PC-3 (cell line): ENCODE measurements at regions of chr5 and their contacts with region 1.

Region 1: DNA sequence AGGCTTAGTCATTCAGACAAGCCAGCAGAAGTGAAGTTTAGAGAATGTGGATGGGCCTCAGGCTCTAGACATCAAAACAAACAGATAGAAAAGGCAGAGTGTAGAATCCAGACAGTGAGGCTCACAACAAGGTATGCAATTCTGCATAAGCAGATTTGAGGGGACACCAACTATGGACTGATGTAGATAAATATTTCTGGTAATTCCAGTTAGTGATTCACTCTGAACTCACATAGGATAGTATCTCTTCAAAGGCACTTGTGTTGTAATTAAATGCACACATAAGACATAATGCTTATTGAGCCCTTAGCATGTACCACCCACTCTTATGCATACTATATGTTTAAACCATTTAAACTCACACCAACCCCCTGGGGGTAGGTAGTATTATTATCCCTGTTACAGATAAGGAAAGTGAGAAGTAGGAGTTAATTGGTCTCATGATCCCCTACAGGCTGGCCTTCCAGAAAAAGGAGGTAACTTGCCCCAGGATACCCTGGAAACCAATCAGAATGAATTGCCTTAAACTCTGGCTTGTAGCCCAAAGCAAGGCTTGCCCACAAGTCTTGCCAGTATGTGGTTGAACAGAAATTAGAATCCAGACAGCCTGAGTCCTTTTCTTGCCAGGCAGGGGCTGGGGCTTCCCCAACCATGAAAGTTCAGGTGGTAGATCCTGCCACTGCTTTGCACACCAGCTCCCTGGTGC is 39.5 kb upstream of the HSPB3 start:
- DNase-seq: peak; percentile 77
- ATAC-seq: peak; percentile 51
- H3K4me3 ChIP-seq: no peak overlapping the region
- H3K27ac ChIP-seq: no peak overlapping the region
- H3K4me1 ChIP-seq: peaks cover 7% of the 10 kb centered on the region; the same call in 1 of the 2 replicates
- H3K27me3 ChIP-seq: no peaks in the 10 kb centered on the region
- CTCF ChIP-seq: no peak

Region 2: GRCh38 chr5:54295651-54296276 is 120.3 kb before region 1 on chr5:
- CTCF ChIA-PET with region 1: no interaction called
- POLR2A ChIA-PET with region 1: no interaction called
- intact Hi-C with region 1: loop called (anchors 5 kb)
- DNase-seq: no peak
- ATAC-seq: peak; percentile 53
- H3K4me3 ChIP-seq: no peak overlapping the region
- H3K27ac ChIP-seq: no peak overlapping the region
- H3K4me1 ChIP-seq: peaks cover 11% of the 10 kb centered on the region; the same call in 1 of the 2 replicates
- H3K27me3 ChIP-seq: no peaks in the 10 kb centered on the region
- CTCF ChIP-seq: no peak

Region 3: GRCh38 chr5:54310433-54311175 is 105.4 kb before region 1 on chr5 and contains the start of gene ARL15:
- CTCF ChIA-PET with region 1: interaction called, 8 read pairs
- POLR2A ChIA-PET with region 1: interaction called, 3 read pairs
- intact Hi-C with region 1: loop called (anchors 2 kb)
- DNase-seq: peak; percentile 89
- ATAC-seq: peak; percentile 87
- H3K4me3 ChIP-seq: peak within 1 kb of the TSS; percentile 95
- H3K27ac ChIP-seq: no peak within 1 kb of the TSS
- H3K4me1 ChIP-seq: peaks cover 9% of the 10 kb centered on the region; the same call in 1 of the 2 replicates
- H3K27me3 ChIP-seq: no peaks in the 10 kb centered on the region
- CTCF ChIP-seq: no peak
- total RNA-seq, gene ARL15: 6.0 and 6.9 TPM in 2 replicates